Transverse colon (tissue), 4 donors: ENCODE measurements at regions of chr12 and their contacts with region 1.

Region 1: DNA sequence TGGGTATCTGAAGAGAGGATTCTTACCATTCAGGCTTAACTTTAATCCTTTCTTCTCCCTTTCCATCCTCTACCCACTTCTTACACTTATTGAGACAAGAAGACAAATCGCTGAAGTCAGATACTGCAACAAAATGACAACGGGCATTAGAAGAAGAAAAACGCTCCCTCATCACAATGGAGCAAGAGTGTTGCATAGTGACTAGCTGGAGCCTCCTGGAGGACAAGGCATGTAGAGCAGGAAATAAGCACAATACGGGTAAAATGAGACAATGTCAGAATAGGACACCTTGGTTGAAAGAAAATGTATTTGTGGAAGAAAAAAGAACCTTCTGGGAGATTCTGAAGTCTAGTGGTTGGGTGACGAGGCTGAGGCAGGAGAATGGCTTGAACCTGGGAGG is 501.0 kb downstream of the RERGL start:
- DNase-seq: no peak
- H3K4me3 ChIP-seq: no peak overlapping the region
- H3K27ac ChIP-seq: no peak overlapping the region
- H3K4me1 ChIP-seq: no peaks in the 10 kb centered on the region
- H3K27me3 ChIP-seq: no peaks in the 10 kb centered on the region
- CTCF ChIP-seq: peak in 2 of 5 experiments; percentile 5 to 29
- EP300 ChIP-seq: no peak
- POLR2A ChIP-seq: no peak

Region 2: GRCh38 chr12:17661250-17661649 is 72.3 kb after region 1 on chr12:
- in situ Hi-C with region 1: no loop called
- intact Hi-C with region 1: no loop called
- DNase-seq: no peak
- H3K4me3 ChIP-seq: no peak overlapping the region
- H3K27ac ChIP-seq: no peak overlapping the region
- H3K4me1 ChIP-seq: no peaks in the 10 kb centered on the region
- H3K27me3 ChIP-seq: no peaks in the 10 kb centered on the region
- CTCF ChIP-seq: no peak
- EP300 ChIP-seq: no peak
- POLR2A ChIP-seq: no peak

Region 3: GRCh38 chr12:17680220-17680619 is 91.3 kb after region 1 on chr12:
- in situ Hi-C with region 1: loop called in 1 of 4 experiments (anchors 25 kb)
- intact Hi-C with region 1: no loop called
- DNase-seq: no peak
- H3K4me3 ChIP-seq: no peak overlapping the region
- H3K27ac ChIP-seq: no peak overlapping the region
- H3K4me1 ChIP-seq: no peaks in the 10 kb centered on the region
- H3K27me3 ChIP-seq: no peaks in the 10 kb centered on the region
- CTCF ChIP-seq: no peak
- EP300 ChIP-seq: no peak
- POLR2A ChIP-seq: no peak